ENCODE measurements at regions of chr6 and their contacts with region 1.

Region 1: DNA sequence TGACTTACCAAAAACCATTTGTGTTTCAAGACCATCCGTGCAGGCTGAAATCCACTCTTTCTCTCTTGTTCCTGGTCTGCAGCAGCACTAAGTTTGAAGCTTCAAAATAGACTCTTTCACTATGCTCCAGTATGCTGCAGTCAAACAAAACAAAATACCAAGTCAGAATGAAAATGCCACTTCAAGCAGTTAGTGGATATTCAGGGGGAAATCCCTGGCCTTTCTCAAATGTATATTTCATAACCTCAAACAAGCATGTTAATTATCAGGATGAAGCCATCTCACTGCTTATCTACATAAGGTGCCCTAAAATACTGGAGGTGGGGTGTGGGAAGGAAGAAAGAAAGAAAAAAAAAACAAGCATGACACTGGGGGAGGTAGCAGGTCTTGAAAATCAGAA is 103.5 kb downstream of the ATXN1 start:
- DNase-seq: peak; percentile 12
- ATAC-seq: peak; percentile 60
- H3K4me3 Mint-ChIP-seq: peak overlapping the region; percentile 42
- H3K27ac Mint-ChIP-seq: peak overlapping the region; percentile 88
- H3K4me1 Mint-ChIP-seq: peaks cover 78% of the 10 kb centered on the region
- H3K27me3 Mint-ChIP-seq: no peaks in the 10 kb centered on the region
- CTCF ChIP-seq: no peak

Region 2: GRCh38 chr6:16602035-16602434 is 55.7 kb before region 1 on chr6:
- CTCF ChIA-PET with region 1: interaction called, 5 read pairs
- POLR2A ChIA-PET with region 1: no interaction called
- intact Hi-C with region 1: loop called (anchors 5 kb)
- DNase-seq: peak; percentile 75
- ATAC-seq: peak; percentile 95
- H3K4me3 Mint-ChIP-seq: no peak overlapping the region
- H3K27ac Mint-ChIP-seq: peak overlapping the region; percentile 66
- H3K4me1 Mint-ChIP-seq: peaks cover 46% of the 10 kb centered on the region
- H3K27me3 Mint-ChIP-seq: no peaks in the 10 kb centered on the region
- CTCF ChIP-seq: no peak

Region 3: DNA sequence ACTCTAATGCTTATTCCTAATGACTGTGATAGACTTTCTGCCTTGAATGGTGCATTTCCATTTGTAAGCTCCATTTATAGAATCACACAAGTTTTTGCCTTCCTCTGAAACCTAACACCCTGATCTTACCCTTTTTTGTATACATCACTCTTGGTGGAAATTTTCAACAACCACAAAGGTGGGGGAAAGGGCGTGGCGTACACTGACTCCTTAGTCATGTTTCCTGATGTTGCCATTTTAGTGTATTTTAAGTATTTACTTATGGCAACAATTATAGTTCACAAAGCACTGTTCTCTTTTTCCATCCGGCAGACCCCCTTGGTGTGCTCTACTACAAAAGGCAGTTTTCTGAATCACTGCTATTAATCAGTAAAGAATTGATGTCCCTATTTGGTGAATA is 11.5 kb after region 1 on chr6:
- CTCF ChIA-PET with region 1: interaction called, 11 read pairs
- POLR2A ChIA-PET with region 1: no interaction called
- intact Hi-C with region 1: no loop called
- DNase-seq: peak; percentile 91
- ATAC-seq: peak; percentile 82
- H3K4me3 Mint-ChIP-seq: peak overlapping the region; percentile 42
- H3K27ac Mint-ChIP-seq: peak overlapping the region; percentile 88
- H3K4me1 Mint-ChIP-seq: peaks cover 70% of the 10 kb centered on the region
- H3K27me3 Mint-ChIP-seq: no peaks in the 10 kb centered on the region
- CTCF ChIP-seq: no peak

Region 4: GRCh38 chr6:16690608-16691198 is 32.9 kb after region 1 on chr6:
- CTCF ChIA-PET with region 1: interaction called, 15 read pairs
- POLR2A ChIA-PET with region 1: interaction called, 8 read pairs
- intact Hi-C with region 1: loop called (anchors 5 kb)
- DNase-seq: peak; percentile 77
- ATAC-seq: peak; percentile 70
- H3K4me3 Mint-ChIP-seq: peak overlapping the region; percentile 17
- H3K27ac Mint-ChIP-seq: peak overlapping the region; percentile 92
- H3K4me1 Mint-ChIP-seq: peaks cover 86% of the 10 kb centered on the region
- H3K27me3 Mint-ChIP-seq: no peaks in the 10 kb centered on the region
- CTCF ChIP-seq: no peak

Region 5: DNA sequence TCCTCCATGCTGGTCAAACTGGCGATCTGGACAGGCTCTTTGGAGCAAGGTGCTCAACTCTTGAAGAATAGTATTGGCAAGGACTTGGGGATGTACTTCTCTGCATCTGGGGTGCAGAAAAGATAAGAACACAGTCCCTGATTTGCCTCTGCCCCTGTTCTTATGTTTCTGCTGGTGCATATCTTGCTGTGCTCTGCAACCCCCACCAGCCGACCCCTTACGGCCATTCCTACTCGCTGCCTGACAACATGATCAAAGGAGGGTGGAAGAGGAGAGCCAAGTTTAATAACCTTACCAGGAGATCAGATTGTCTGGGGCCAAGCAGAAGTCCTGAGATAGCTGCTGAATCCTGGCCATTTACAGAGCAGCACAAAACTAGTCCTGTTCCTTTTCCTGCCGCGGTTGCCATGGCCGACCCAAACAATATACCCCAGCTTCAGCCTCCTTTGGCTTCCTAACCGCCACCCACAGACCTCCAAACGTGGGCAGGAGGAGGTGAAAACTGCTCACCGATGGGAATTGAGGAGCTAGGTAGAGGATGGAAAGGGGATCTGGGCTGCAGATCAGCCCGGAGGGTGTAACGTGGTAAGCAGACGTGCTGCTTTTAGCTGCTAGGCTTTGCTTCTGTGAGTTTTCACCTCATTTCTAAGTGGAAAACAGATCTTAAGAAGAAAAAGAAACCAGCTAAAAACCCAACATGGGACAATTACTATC is 42.6 kb after region 1 on chr6:
- CTCF ChIA-PET with region 1: interaction called, 6 read pairs
- POLR2A ChIA-PET with region 1: interaction called, 26 read pairs
- intact Hi-C with region 1: loop called (anchors 5 kb)
- DNase-seq: peak; percentile 75
- ATAC-seq: peak; percentile 17
- H3K4me3 Mint-ChIP-seq: peak overlapping the region; percentile 74
- H3K27ac Mint-ChIP-seq: peak overlapping the region; percentile 99
- H3K4me1 Mint-ChIP-seq: peaks cover 69% of the 10 kb centered on the region
- H3K27me3 Mint-ChIP-seq: no peaks in the 10 kb centered on the region
- CTCF ChIP-seq: no peak

Region 6: DNA sequence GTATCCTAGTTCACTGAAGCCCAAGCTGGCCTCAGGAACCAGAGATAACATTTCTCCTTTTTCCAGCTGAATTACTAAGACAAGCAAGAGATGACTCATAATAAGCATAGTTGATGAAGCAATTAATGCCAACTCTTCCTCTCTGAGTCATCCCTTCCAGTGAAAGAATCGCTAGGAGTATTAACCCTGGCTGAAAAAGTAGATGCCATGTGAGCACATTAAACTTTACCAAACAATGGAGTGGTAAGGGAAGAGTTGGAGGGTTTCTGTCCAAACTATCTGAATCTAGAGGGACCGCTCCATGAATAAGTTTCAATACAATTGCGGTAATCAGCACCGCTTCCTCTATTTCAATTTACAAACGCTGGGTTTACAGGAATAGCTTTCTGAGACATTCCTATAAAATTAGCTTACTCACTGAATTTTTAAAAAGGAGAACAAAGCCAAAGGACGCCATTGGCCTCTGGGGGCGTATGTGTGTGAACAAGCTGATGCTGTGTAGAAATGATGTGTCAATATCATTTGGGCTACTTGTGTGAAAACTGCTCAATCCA is 55.2 kb after region 1 on chr6:
- CTCF ChIA-PET with region 1: no interaction called
- POLR2A ChIA-PET with region 1: interaction called, 12 read pairs
- intact Hi-C with region 1: no loop called
- DNase-seq: peak; percentile 47
- ATAC-seq: peak; percentile 37
- H3K4me3 Mint-ChIP-seq: peak overlapping the region; percentile 68
- H3K27ac Mint-ChIP-seq: peak overlapping the region; percentile 92
- H3K4me1 Mint-ChIP-seq: peaks cover 62% of the 10 kb centered on the region
- H3K27me3 Mint-ChIP-seq: no peaks in the 10 kb centered on the region
- CTCF ChIP-seq: peak; percentile 44